K562 (cell line): ENCODE measurements at regions of chr1 and their contacts with region 1.

Region 1: GRCh38 chr1:9717193-9718005 is 65.9 kb downstream of the PIK3CD start:
- DNase-seq: peak; percentile 88 to 98 (median 92)
- ATAC-seq: peak; percentile 81
- H3K4me3 ChIP-seq: peak overlapping the region; percentile 48
- H3K27ac ChIP-seq: peak overlapping the region; percentile 87
- H3K4me1 ChIP-seq: peaks cover 61 to 94% of the 10 kb centered on the region in 2 experiments
- H3K27me3 ChIP-seq: no peaks in the 10 kb centered on the region
- CTCF ChIP-seq: peak; percentile 45 to 49 (median 46)
- EP300 ChIP-seq: peak; percentile 77
- POLR2A ChIP-seq: peak; percentile 91
- RAD21 ChIP-seq: peak; percentile 29 to 37

Region 2: GRCh38 chr1:9643351-9644256 is 73.8 kb before region 1 on chr1:
- CTCF ChIA-PET with region 1: no interaction called
- POLR2A ChIA-PET with region 1: no interaction called
- in situ Hi-C with region 1: no loop called
- intact Hi-C with region 1: no loop called
- DNase-seq: no peak
- ATAC-seq: peak; percentile 31; the same call in 1 of the 3 replicates
- H3K4me3 ChIP-seq: no peak overlapping the region
- H3K27ac ChIP-seq: no peak overlapping the region
- H3K4me1 ChIP-seq: peaks cover 6 to 7% of the 10 kb centered on the region in 2 experiments; a peak in 2 of 5 replicates
- H3K27me3 ChIP-seq: peaks cover 2 to 8% of the 10 kb centered on the region in 2 experiments; a peak in 1 of 5 replicates
- CTCF ChIP-seq: no peak
- EP300 ChIP-seq: no peak
- POLR2A ChIP-seq: no peak
- RAD21 ChIP-seq: no peak

Region 3: GRCh38 chr1:9701661-9702060 is 15.7 kb before region 1 on chr1:
- CTCF ChIA-PET with region 1: no interaction called
- POLR2A ChIA-PET with region 1: interaction called, 6 read pairs
- in situ Hi-C with region 1: no loop called
- intact Hi-C with region 1: loop called (anchors 2 kb)
- DNase-seq: no peak
- ATAC-seq: no peak
- H3K4me3 ChIP-seq: no peak overlapping the region
- H3K27ac ChIP-seq: no peak overlapping the region
- H3K4me1 ChIP-seq: peaks cover 3% of the 10 kb centered on the region in 2 experiments; a peak in 4 of 5 replicates
- H3K27me3 ChIP-seq: no peaks in the 10 kb centered on the region
- CTCF ChIP-seq: no peak
- EP300 ChIP-seq: no peak
- POLR2A ChIP-seq: no peak
- RAD21 ChIP-seq: no peak

Region 4: DNA sequence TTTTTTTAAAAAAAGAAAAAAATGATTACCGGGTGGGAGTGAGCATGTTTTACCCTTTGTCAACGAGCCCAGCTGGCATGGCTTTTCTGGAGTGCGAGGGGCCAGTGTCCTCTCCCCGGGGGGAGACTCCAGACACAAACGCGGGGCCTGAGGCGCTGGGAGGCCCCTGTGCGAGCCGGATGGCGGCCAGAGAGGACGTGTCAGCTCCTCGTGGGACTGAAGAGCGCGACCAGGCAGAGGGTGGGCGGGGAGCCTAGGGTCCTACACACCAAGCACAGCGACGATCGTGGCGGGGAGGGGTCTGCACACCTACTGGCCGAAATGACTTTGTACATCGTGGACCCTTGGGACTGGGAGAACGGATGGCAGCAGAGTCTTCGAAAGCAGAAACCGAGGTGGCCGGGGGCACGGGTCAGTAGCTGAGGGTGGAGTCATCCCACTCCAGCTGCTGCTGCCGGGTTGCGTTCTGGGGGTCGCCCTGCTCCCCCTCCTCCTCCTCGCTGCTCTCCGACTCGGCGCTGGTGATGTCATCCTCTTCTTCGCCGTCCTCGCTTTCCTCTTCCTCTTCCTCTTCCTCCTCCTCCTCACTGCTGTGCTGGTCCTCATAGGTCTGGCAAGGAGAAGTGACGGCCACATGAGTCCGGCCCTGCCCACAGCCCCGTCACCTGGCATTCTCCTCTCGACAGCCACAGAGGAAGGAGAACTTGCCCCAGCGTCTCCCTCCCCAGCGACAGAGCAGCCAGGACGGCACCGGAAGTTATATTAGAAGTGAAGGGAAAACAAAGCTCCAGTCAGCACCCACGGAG is 12.9 kb after region 1 on chr1:
- CTCF ChIA-PET with region 1: no interaction called
- POLR2A ChIA-PET with region 1: interaction called, 10 read pairs
- in situ Hi-C with region 1: no loop called
- intact Hi-C with region 1: no loop called
- DNase-seq: no peak
- ATAC-seq: no peak
- H3K4me3 ChIP-seq: no peak overlapping the region
- H3K27ac ChIP-seq: no peak overlapping the region
- H3K4me1 ChIP-seq: peaks cover 0 to 7% of the 10 kb centered on the region in 2 experiments; a peak in 1 of 5 replicates
- H3K27me3 ChIP-seq: no peaks in the 10 kb centered on the region
- CTCF ChIP-seq: no peak
- EP300 ChIP-seq: no peak
- POLR2A ChIP-seq: no peak
- RAD21 ChIP-seq: no peak